Activated CD4-positive, alpha-beta T cell treated with anti-CD3 and anti-CD28 coated beads for 36 hours (primary cell): ENCODE measurements at regions of chr1 and their contacts with region 1.

Region 1: DNA sequence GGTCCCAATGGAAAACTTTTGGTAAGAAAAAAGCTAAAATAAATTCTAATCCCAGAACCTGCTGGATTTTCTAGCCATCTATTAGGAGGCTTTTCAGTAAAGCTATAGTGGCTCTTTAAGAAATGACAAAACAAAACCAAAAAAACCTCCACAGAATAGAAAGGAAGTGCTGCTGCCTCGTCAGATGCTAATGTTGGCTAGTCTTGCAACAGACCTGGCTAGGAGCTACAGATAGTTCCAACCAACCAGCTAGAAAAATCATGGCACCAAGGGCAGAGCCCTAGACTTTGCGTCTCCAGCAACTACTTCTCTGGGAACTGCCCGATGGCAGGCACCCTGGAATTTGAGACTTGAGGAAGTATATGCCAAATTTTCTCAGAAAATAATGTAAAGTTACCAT is 7.6 kb downstream of the CD101 start:
- DNase-seq: peak; percentile 25
- ATAC-seq: peak; percentile 53
- H3K4me3 Mint-ChIP-seq: no peak overlapping the region
- H3K27ac Mint-ChIP-seq: peak overlapping the region; percentile 14
- H3K4me1 Mint-ChIP-seq: peaks cover 54% of the 10 kb centered on the region
- H3K27me3 Mint-ChIP-seq: peaks cover 3% of the 10 kb centered on the region

Region 2: GRCh38 chr1:116667575-116668105 is 341.5 kb before region 1 on chr1 and contains the start of gene IGSF3:
- CTCF ChIA-PET with region 1: interaction called, 12 read pairs
- POLR2A ChIA-PET with region 1: no interaction called
- intact Hi-C with region 1: no loop called
- DNase-seq: peak; percentile 76
- ATAC-seq: peak; percentile 92
- H3K4me3 Mint-ChIP-seq: peak within 1 kb of the TSS; percentile 69
- H3K27ac Mint-ChIP-seq: no peak within 1 kb of the TSS
- H3K4me1 Mint-ChIP-seq: peaks cover 10% of the 10 kb centered on the region
- H3K27me3 Mint-ChIP-seq: peaks cover 39% of the 10 kb centered on the region
- total RNA-seq, gene IGSF3: 3.8 to 4.1 TPM

Region 3: GRCh38 chr1:116733476-116734365 is 275.4 kb before region 1 on chr1:
- CTCF ChIA-PET with region 1: no interaction called
- POLR2A ChIA-PET with region 1: no interaction called
- intact Hi-C with region 1: no loop called
- DNase-seq: no peak
- ATAC-seq: no peak
- H3K4me3 Mint-ChIP-seq: no peak overlapping the region
- H3K27ac Mint-ChIP-seq: no peak overlapping the region
- H3K4me1 Mint-ChIP-seq: peaks cover 32% of the 10 kb centered on the region
- H3K27me3 Mint-ChIP-seq: no peaks in the 10 kb centered on the region

Region 4: DNA sequence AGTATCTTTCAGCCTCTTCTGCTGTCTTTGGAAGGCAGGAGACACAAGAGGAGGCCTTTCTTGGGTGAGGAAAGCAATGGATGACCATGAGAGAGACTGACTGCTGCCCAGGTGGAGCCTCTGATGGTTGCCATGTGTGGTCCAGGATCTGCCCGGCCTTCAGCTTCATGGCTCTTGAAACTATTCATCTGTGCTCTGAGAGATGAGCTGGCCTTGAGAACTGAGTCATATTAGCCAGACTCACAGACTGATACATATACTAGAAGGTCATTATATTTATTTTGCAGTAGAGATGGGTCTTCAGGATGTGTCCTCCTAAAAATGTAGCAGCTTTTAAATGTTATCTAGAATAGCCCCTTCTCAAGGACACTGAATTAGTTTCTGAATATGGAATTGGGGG is 65.7 kb before region 1 on chr1:
- CTCF ChIA-PET with region 1: no interaction called
- POLR2A ChIA-PET with region 1: no interaction called
- intact Hi-C with region 1: no loop called
- DNase-seq: peak; percentile 20
- ATAC-seq: peak; percentile 83
- H3K4me3 Mint-ChIP-seq: no peak overlapping the region
- H3K27ac Mint-ChIP-seq: no peak overlapping the region
- H3K4me1 Mint-ChIP-seq: peaks cover 32% of the 10 kb centered on the region
- H3K27me3 Mint-ChIP-seq: no peaks in the 10 kb centered on the region